IMR-90 (cell line): ENCODE measurements at regions of chr3 and their contacts with region 1.

Region 1: DNA sequence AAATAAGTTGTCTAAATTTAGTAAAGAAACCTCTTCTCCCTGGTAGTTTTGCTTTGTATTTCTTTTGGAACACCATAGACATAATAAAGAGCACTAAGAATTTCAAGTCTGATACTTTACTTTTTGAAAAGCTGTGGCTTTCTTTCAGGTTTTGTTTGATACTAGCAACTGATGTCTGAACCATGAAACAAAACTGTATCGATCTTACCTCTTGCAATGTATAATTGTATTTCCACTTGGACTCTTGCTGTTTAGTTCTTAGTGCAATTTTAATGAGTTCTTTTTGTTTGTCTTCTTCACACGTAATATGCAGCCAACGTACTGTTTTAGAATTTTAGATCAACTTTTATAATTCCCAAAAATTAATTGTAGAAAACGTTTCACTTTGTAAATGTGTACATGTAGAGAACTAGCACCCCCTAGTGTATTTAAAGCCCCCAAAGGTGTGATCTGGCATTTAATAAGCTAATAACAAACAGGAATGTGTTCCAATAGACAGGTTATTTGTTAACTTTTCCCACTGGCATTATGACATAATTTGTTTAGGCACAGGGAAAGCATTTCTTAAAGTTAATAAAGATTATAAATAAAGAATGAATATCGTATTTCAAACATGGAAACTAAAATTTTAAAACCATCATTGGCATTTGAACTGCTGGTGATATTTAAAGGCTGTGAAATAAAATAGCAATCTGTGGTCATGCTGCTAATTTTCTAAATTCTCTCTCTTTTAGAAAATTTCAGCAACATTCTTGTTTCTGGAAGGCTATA is 289.1 kb upstream of the DNAJC19 start:
- DNase-seq: no peak
- ATAC-seq: no peak
- H3K4me3 ChIP-seq: no peak overlapping the region
- H3K27ac ChIP-seq: no peak overlapping the region
- H3K4me1 ChIP-seq: no peaks in the 10 kb centered on the region
- H3K27me3 ChIP-seq: no peaks in the 10 kb centered on the region
- CTCF ChIP-seq: 0 out of 2 replicates have a peak, but pooled peaks have one; percentile 18
- POLR2A ChIP-seq: no peak
- RAD21 ChIP-seq: no peak

Region 2: GRCh38 chr3:180626844-180627243 is 651.8 kb before region 1 on chr3:
- CTCF ChIA-PET with region 1: no interaction called
- POLR2A ChIA-PET with region 1: no interaction called
- dilution Hi-C with region 1: no loop called
- in situ Hi-C with region 1: no loop called
- intact Hi-C with region 1: loop called (anchors 5 kb)
- DNase-seq: no peak
- ATAC-seq: no peak
- H3K4me3 ChIP-seq: no peak overlapping the region
- H3K27ac ChIP-seq: no peak overlapping the region
- H3K4me1 ChIP-seq: no peaks in the 10 kb centered on the region
- H3K27me3 ChIP-seq: no peaks in the 10 kb centered on the region
- CTCF ChIP-seq: no peak
- POLR2A ChIP-seq: no peak
- RAD21 ChIP-seq: no peak